ENCODE measurements at regions of chr12 and their contacts with region 1.

Region 1: DNA sequence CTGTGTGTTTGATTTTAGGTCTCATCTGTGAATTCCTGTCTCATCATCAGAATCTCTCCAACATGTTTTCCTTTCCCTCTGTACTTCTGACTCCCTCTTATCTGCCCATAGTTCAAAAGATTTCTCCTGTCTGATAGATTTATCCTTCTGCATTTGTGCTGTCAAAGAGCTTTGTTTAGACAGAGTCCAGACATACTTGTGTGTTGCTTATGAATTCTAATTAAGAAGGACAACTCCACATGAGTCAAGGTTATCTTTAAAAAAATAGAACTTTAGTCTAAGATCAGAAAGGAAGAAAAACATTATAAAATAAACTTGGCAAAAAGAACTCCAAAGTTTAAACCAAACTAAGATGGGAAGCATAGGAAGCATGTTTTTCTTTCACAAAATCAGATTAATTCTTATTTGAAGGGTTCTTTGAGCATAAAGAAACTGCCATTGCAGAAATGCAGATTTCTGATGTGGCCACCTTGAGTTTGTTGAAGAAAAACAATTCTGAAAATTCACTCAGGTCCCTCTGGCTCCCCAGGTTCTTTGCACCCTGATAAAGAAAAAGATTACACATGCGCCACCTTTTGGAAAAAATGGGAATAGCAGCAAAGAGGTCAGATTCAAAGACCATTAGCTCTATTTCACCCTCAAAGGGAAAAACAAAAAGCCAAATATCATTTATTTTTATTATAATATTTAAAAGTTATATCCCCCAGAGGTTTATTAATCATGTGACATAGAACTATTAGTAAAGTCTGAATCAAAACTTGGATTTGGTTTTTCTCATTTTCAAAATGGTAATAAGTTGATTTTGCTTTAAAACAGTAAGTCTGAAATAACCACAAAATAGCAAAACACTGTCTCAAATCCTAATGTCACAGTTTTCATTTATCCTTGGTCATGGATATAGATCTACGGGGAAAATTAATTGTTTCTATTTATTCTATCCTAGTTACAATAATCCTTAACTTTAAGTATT is 143.7 kb upstream of the DCN start:
- DNase-seq: no peak
- ATAC-seq: no peak
- H3K4me3 Mint-ChIP-seq: no peak overlapping the region
- H3K27ac Mint-ChIP-seq: no peak overlapping the region
- H3K4me1 Mint-ChIP-seq: no peaks in the 10 kb centered on the region
- H3K27me3 Mint-ChIP-seq: peaks cover 2% of the 10 kb centered on the region
- CTCF ChIP-seq: peak; percentile 86

Region 2: GRCh38 chr12:90940872-90941499 is 385.4 kb before region 1 on chr12:
- CTCF ChIA-PET with region 1: interaction called, 3 read pairs
- POLR2A ChIA-PET with region 1: no interaction called
- intact Hi-C with region 1: loop called (anchors 1 kb)
- DNase-seq: no peak
- ATAC-seq: peak; percentile 28
- H3K4me3 Mint-ChIP-seq: no peak overlapping the region
- H3K27ac Mint-ChIP-seq: no peak overlapping the region
- H3K4me1 Mint-ChIP-seq: no peaks in the 10 kb centered on the region
- H3K27me3 Mint-ChIP-seq: peaks cover 12% of the 10 kb centered on the region
- CTCF ChIP-seq: peak; percentile 36

Region 3: GRCh38 chr12:90978117-90978770 is 348.1 kb before region 1 on chr12:
- CTCF ChIA-PET with region 1: interaction called, 6 read pairs
- POLR2A ChIA-PET with region 1: no interaction called
- intact Hi-C with region 1: loop called (anchors 1 kb)
- DNase-seq: no peak
- ATAC-seq: no peak
- H3K4me3 Mint-ChIP-seq: no peak overlapping the region
- H3K27ac Mint-ChIP-seq: no peak overlapping the region
- H3K4me1 Mint-ChIP-seq: no peaks in the 10 kb centered on the region
- H3K27me3 Mint-ChIP-seq: peaks cover 8% of the 10 kb centered on the region
- CTCF ChIP-seq: no peak

Region 4: DNA sequence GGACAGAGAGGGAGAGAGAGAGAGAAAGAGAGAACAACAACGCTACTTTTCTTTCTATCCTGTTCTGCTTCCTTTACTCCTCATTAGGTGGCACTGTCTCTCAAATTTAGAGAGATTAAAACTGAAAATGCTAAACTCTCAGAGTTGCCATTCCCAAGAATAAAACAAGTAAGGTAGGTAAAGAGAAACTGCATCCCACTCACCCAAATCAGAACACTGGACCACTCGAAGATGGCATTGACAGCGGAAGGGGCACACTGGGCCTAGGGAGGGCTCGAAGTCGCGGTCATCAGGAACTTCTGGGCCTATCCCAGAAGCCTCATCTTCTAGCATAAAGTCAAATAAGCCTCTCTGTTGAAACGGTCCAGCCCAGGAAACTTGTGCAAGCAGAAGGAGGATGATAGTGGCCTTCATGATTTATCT is 148.2 kb before region 1 on chr12:
- CTCF ChIA-PET with region 1: interaction called, 9 read pairs
- POLR2A ChIA-PET with region 1: no interaction called
- intact Hi-C with region 1: loop called (anchors 1 kb)
- DNase-seq: no peak
- ATAC-seq: no peak
- H3K4me3 Mint-ChIP-seq: no peak overlapping the region
- H3K27ac Mint-ChIP-seq: no peak overlapping the region
- H3K4me1 Mint-ChIP-seq: no peaks in the 10 kb centered on the region
- H3K27me3 Mint-ChIP-seq: no peaks in the 10 kb centered on the region
- CTCF ChIP-seq: no peak

Region 5: GRCh38 chr12:91478500-91478899 is 152.2 kb after region 1 on chr12:
- CTCF ChIA-PET with region 1: no interaction called
- POLR2A ChIA-PET with region 1: no interaction called
- intact Hi-C with region 1: no loop called
- DNase-seq: no peak
- ATAC-seq: no peak
- H3K4me3 Mint-ChIP-seq: no peak overlapping the region
- H3K27ac Mint-ChIP-seq: no peak overlapping the region
- H3K4me1 Mint-ChIP-seq: no peaks in the 10 kb centered on the region
- H3K27me3 Mint-ChIP-seq: peaks cover 9% of the 10 kb centered on the region
- CTCF ChIP-seq: no peak